ENCODE measurements at regions of chr18 and their contacts with region 1.

Region 1: DNA sequence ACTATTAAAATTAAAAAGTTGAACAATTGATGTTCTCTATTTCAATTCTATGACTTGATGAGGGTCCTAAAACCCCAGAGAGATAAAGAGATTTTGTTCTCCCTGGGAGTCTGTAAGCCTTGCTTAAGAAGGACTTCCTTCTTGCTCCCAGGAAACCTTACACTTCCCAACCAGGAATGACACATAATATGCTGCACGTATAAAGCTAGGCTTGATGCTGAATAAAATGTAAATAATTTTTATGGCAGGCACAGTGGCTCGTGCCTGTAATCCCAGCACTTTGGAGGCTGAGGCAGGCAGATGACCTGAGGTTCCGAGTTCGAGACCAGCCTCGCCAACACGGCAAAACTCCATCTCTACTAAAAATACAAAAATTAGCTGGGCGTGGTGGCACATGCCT is 27.8 kb downstream of the SPIRE1 start:
- DNase-seq: no peak
- H3K4me3 ChIP-seq: no peak overlapping the region
- CTCF ChIP-seq: no peak
- POLR2A ChIP-seq: no peak

Region 2: DNA sequence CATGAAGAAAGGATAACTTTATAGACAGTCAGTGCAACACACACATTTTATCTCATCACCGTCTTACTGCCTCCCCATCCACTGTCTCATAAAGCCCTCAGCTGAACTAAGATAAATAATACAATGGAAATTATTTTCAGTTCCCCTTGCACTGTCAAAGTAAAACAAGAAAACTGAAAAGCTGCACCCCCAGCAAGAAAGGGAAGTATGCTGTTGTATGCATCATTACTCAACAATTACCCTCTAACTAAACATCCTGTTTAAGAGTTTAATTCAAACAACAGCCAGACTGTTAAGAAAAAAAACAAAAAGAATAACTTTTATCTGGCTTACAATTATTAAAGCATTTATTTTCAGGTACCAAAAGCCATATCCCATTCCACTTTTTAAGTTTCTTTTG is 747.0 kb before region 1 on chr18:
- intact Hi-C with region 1: no loop called
- DNase-seq: no peak
- H3K4me3 ChIP-seq: no peak overlapping the region
- CTCF ChIP-seq: no peak
- POLR2A ChIP-seq: no peak

Region 3: DNA sequence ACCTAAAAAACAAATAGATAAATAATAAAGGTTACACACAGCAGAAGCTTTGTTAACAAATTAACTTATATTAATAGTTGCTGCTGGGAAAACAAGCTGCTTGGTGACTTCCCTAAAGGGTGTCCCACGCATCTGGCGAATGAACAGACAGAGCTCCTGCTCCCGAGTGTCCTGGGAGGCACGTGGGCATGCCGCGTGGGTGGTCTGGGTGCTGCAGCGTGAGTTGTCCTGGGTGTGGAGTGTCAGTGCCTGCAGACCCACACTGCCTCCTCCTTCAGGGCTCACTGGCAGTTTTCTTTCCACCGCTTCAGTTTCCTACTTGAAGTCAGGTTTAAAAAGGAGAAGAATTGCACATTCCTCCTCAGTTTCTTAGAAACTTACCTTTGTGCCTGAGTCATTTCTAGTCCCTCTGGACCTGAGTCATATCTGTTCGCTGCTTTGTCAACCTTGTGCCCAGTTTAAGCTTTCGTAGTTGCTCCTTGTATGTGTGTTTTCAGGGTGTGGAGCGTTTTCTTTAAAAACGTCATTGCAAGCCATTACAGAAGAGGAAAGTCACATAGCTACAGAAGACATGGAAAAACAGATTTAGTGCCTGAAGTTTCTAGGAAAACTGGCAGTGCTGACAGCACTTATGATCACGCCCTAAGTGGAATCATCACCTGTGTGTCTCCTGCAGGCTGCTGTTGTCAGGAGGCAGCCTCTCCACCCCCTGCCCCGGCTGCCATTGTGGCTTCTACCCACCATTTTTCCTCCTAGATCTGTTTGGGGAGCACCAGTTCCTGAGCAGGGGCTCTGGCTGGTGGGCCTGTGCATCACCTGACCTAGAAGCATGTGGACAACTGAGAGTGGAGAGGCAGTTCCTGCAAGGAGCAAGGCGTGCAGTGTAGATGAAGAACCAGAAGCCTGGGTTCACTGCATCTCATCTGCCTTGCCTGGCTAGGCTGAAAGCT is 624.3 kb before region 1 on chr18:
- intact Hi-C with region 1: loop called (anchors 5 kb)
- DNase-seq: no peak
- H3K4me3 ChIP-seq: no peak overlapping the region
- CTCF ChIP-seq: no peak
- POLR2A ChIP-seq: no peak